ENCODE measurements at regions of chr14 and their contacts with region 1.

Region 1: GRCh38 chr14:52467515-52468266 is 84.6 kb downstream of the TXNDC16 start:
- DNase-seq: peak in 1 of 14 experiments; percentile 26
- ATAC-seq: no peak
- H3K4me3 ChIP-seq: no peak overlapping the region
- H3K4me3 Mint-ChIP-seq: no peak overlapping the region
- H3K27ac ChIP-seq: no peak overlapping the region
- H3K27ac Mint-ChIP-seq: no peak overlapping the region
- H3K4me1 ChIP-seq: no peaks in the 10 kb centered on the region
- H3K4me1 Mint-ChIP-seq: no peaks in the 10 kb centered on the region
- H3K27me3 ChIP-seq: no peaks in the 10 kb centered on the region
- H3K27me3 Mint-ChIP-seq: no peaks in the 10 kb centered on the region
- CTCF ChIP-seq: no peak

Region 2: GRCh38 chr14:51996148-51996746 is 471.4 kb before region 1 on chr14:
- CTCF ChIA-PET with region 1: no interaction called
- POLR2A ChIA-PET with region 1: no interaction called
- intact Hi-C with region 1: loop called in 1 of 2 experiments (anchors 5 kb)
- DNase-seq: peak in 4 of 14 experiments; percentile 20 to 70 (median 62)
- ATAC-seq: no peak
- H3K4me3 ChIP-seq: no peak overlapping the region
- H3K4me3 Mint-ChIP-seq: no peak overlapping the region
- H3K27ac ChIP-seq: no peak overlapping the region
- H3K27ac Mint-ChIP-seq: no peak overlapping the region
- H3K4me1 ChIP-seq: peaks cover 7% of the 10 kb centered on the region
- H3K4me1 Mint-ChIP-seq: peaks cover 58% of the 10 kb centered on the region
- H3K27me3 ChIP-seq: no peaks in the 10 kb centered on the region
- H3K27me3 Mint-ChIP-seq: no peaks in the 10 kb centered on the region
- CTCF ChIP-seq: peak; percentile 54

Region 3: DNA sequence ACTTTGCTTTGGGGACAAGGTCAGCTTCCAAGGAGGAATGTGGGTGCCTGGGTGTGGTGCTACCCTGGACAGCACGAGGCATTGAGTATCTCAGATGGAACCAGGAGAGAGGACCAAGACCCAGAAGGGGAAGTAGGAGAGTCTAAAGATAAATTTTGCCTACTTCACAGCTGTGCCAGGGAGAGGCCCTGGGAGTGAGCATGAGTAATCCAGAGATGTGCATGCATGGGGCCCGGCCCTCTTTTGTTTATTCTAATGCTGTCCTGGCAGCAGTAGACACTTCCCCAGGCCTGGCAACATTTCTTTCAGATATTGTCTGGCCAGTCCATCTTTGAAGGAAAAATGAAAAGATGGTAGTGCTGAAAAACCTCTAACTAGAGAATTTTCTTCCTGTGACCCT is 373.2 kb after region 1 on chr14:
- CTCF ChIA-PET with region 1: no interaction called
- POLR2A ChIA-PET with region 1: no interaction called
- intact Hi-C with region 1: no loop called
- DNase-seq: no peak
- ATAC-seq: no peak
- H3K4me3 ChIP-seq: no peak overlapping the region
- H3K4me3 Mint-ChIP-seq: no peak overlapping the region
- H3K27ac ChIP-seq: no peak overlapping the region
- H3K27ac Mint-ChIP-seq: no peak overlapping the region
- H3K4me1 ChIP-seq: no peaks in the 10 kb centered on the region
- H3K4me1 Mint-ChIP-seq: no peaks in the 10 kb centered on the region
- H3K27me3 ChIP-seq: no peaks in the 10 kb centered on the region
- H3K27me3 Mint-ChIP-seq: no peaks in the 10 kb centered on the region
- CTCF ChIP-seq: no peak

Measured in CD4-positive, alpha-beta T cell (primary cell).